Mammary epithelial cell (primary cell): ENCODE measurements at regions of chr9 and their contacts with region 1.

Region 1: DNA sequence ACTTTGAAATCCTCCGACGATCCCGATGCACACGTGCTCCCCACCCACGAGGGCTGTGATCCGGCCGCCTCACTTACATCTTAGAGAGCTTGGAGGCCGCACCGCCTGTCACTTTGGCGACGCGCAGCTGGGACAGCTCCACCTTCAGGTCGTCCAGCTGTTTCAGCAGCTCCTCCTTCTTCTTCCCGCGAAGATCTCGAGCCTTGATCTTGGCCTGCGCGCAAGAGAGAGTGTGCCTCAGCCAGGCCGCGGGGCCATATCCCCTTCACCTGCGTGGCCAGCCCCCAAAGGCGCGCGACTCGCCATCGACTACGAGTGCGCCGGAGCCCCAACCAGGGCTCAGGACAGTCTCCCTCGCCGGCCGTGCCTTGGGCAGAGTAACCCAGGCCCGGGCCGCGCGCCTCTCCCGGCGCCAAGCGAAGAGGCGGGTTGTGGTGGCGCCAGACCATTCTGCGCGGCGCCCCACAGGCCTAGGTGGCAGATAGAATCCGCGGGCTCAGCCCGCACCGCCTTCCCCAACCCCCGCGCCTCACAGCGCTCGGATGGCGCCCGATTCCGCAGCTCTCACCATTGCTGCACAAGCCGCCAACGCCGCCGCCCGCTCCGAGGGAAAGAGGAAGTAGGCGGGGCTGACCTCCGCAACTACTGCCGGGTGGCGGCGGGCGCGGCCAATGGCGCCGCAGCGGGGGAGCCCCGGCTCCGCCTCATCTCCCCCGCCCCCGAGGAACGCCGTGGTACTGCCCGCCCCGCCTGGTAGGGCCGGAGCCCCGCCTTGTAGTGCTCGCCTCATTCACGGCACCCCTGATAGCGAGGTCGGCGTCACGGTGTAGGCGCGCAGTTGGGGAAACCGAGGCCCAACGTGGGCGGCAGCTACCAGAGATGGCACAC is at the starts of genes ARPC5L and RPL35:
- DNase-seq: peak; percentile 93
- H3K4me3 ChIP-seq: peak within 1 kb of the TSS; percentile 47 to 88 (median 87)
- H3K27ac ChIP-seq: peak within 1 kb of the TSS; percentile 60
- H3K4me1 ChIP-seq: peaks cover 48% of the 10 kb centered on the region
- H3K27me3 ChIP-seq: no peaks in the 10 kb centered on the region
- CTCF ChIP-seq: peak in 1 of 2 donors; percentile 35
- total RNA-seq, gene ARPC5L: 21.2 to 79.8 TPM
- total RNA-seq, gene RPL35: 1,457 to 1,657 TPM

Region 2: DNA sequence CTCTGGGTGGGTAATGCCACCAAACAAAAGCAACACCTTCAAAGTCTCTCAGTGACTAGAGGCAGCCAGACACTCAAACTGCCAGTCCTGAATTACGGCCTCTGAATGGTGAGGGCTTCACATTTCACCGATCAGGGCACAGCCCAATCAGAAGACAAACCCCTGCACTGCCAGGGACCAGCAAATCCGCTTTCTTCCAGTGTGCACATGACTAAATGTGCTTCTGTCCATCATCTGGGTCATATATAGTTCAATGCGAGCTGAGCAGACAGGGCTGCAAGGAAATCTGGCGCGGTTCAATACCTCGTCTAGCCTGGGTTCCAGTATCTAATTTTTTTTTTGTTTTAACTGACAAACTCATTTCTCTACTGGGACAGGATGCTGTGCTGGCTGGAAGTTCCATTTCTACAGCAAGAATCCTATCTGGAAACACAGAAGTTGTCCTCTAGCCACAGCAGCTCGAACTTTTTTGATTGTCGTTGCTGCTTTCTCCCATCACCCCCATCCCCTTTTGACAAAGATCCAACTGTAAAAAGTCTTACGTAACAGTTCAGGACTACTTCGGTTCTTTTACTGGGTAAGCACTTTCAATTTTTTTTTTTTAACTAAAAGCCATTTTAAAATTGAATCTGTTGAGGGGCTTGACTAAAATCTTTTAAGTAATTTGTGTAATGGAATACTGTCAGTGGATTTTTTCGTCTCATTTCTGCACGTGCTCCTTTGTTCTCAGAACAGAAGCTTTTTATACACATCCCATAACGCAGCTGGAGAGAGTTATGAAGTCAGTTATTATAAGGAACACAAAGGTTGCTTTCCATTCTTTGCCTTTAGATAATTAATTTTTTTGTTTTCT is 203.2 kb before region 1 on chr9:
- CTCF ChIA-PET with region 1: no interaction called
- dilution Hi-C with region 1: no loop called
- in situ Hi-C with region 1: no loop called
- intact Hi-C with region 1: loop called (anchors 5 kb)
- DNase-seq: peak; percentile 94
- H3K4me3 ChIP-seq: peak overlapping the region; percentile 49 to 95 (median 73)
- H3K27ac ChIP-seq: peak overlapping the region; percentile 95
- H3K4me1 ChIP-seq: peaks cover 17% of the 10 kb centered on the region
- H3K27me3 ChIP-seq: no peaks in the 10 kb centered on the region
- CTCF ChIP-seq: no peak

Region 3: DNA sequence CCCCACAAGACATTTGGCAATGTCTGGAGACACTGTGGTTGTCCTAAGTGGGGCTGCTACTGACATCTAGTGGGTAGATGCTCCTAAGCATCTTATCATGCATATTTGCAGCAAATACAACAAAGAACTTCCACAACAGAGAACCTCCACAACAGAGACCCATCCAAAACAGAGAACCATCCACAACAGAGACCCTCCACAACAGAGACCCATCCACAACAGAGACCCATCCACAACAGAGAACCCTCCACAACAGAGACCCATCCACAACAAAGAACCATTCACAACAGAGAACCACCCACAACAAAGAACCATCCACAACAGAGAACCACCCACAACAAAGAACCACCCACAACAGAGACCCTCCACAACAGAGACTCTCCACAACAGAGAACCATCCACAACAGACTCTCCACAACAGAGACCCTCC is 33.2 kb after region 1 on chr9:
- CTCF ChIA-PET with region 1: no interaction called
- dilution Hi-C with region 1: no loop called
- in situ Hi-C with region 1: no loop called
- intact Hi-C with region 1: loop called (anchors 2 kb)
- DNase-seq: peak; percentile 24
- H3K4me3 ChIP-seq: no peak overlapping the region
- H3K27ac ChIP-seq: no peak overlapping the region
- H3K4me1 ChIP-seq: peaks cover 7% of the 10 kb centered on the region
- H3K27me3 ChIP-seq: no peaks in the 10 kb centered on the region
- CTCF ChIP-seq: peak; percentile 40 to 64

Region 4: DNA sequence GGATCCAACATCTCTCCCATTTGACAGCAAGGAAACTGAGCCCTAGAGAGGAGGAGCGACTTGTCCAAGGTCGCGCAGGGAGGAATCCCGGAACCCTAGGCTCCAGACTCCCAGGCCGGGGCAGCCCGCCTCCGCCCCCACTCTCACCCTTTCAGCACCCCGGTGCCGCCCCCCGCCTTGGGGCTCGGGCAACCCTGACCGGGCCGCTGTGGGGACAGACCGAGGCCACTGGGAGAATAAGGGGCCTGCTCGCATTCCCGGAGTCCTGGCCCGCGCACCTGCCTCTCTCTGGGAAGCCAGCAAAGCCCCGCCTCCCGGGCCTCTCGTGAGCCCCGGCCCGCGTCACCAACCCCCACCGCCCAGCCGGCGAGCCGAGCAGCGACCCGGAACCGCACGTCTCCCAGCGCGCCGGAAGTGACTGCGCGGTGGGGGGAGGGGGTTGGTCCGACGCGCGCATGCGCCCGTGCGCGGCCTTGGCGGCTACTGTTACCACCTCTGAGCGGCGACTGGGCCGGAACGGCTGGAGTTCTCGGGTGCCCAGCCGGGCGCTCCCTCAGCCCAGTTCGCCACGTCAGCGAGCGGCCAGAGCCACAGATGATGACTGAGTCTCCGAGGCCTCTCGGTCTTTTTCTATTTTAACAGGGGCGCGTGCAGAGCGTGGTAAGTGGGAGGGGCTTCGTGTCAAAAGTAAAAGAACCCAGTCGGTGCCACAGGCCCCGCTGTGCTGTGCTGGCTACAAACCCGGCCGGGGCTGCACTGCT is 79.3 kb after region 1 on chr9 and contains the start of gene GOLGA1:
- CTCF ChIA-PET with region 1: no interaction called
- dilution Hi-C with region 1: no loop called
- in situ Hi-C with region 1: no loop called
- intact Hi-C with region 1: loop called (anchors 2 kb)
- DNase-seq: peak; percentile 95
- H3K4me3 ChIP-seq: peak within 1 kb of the TSS; percentile 86 to 100 (median 88)
- H3K27ac ChIP-seq: peak within 1 kb of the TSS; percentile 87
- H3K4me1 ChIP-seq: peaks cover 11% of the 10 kb centered on the region
- H3K27me3 ChIP-seq: no peaks in the 10 kb centered on the region
- CTCF ChIP-seq: no peak
- total RNA-seq, gene GOLGA1: 11.5 to 17.6 TPM

Region 5: GRCh38 chr9:125143375-125144090 is 281.9 kb after region 1 on chr9 and contains the start of gene SCAI:
- CTCF ChIA-PET with region 1: no interaction called
- dilution Hi-C with region 1: no loop called
- in situ Hi-C with region 1: loop called in 1 of 2 experiments (anchors 10 kb)
- intact Hi-C with region 1: no loop called
- DNase-seq: peak; percentile 98
- H3K4me3 ChIP-seq: peak within 1 kb of the TSS; percentile 38 to 67 (median 59)
- H3K27ac ChIP-seq: no peak within 1 kb of the TSS
- H3K4me1 ChIP-seq: peaks cover 10% of the 10 kb centered on the region
- H3K27me3 ChIP-seq: no peaks in the 10 kb centered on the region
- CTCF ChIP-seq: peak; percentile 83 to 98
- total RNA-seq, gene SCAI: 3.1 to 7.7 TPM